BJ (cell line): ENCODE measurements at regions of chr15 and their contacts with region 1.

Region 1: GRCh38 chr15:48748535-48748934 is 62.3 kb downstream of the CEP152 start:
- DNase-seq: peak; percentile 8
- H3K4me3 ChIP-seq: no peak overlapping the region
- H3K27me3 ChIP-seq: no peaks in the 10 kb centered on the region
- CTCF ChIP-seq: no peak

Region 2: DNA sequence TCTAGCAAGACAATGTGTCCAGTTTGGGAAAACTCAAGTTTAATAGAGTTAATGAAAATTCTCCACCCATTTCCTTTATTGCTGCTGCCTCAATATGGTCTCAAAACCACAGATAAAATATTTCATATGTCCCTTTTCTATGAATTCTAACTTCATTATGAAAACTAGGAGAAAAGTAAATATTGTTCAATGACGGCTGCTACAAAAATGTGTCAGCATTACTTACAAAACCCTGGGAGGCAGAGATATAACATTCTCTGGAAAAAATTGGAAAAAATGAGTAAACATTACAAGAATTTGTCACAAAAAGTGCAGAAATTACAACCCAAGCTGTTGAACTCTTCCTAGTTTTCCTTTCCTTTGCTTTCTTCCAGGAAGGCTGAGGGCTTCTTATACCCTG is 80.8 kb before region 1 on chr15:
- CTCF ChIA-PET with region 1: no interaction called
- POLR2A ChIA-PET with region 1: no interaction called
- DNase-seq: peak; percentile 31
- H3K4me3 ChIP-seq: no peak overlapping the region
- H3K27me3 ChIP-seq: no peaks in the 10 kb centered on the region
- CTCF ChIP-seq: no peak

Region 3: DNA sequence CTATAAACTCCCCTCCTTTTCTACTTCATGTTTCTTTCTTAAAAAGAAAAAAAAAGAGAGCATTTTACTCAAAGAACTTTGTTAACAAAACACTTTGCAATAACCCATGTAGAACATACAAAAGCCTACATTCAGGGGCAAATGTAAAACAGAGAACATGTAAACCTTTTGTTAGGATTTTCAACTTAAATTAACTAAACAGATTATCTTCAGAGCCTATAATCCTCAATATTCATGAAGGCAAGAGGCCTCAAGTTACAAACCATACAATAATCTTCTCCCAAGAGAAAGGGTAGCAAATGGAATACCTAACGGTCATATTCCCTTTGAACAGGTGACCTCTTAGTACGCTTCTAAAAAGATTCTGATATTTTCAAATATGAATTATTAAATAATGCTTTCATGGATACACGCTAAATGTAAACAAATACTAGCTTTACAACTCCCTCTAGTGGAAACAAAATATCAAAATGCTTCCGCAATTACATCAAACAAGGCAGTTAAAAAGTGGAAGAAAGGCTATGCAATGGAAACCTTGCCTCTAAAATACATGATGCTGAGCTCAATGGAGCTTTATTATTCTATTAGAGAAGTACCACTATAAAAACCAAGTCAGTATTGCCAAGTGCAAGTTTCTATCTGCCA is 52.4 kb after region 1 on chr15:
- CTCF ChIA-PET with region 1: no interaction called
- POLR2A ChIA-PET with region 1: interaction called, 10 read pairs
- DNase-seq: no peak
- H3K4me3 ChIP-seq: no peak overlapping the region
- H3K27me3 ChIP-seq: no peaks in the 10 kb centered on the region
- CTCF ChIP-seq: peak; percentile 45